Posterior vena cava (tissue), 2 donors: ENCODE measurements at regions of chrX and their contacts with region 1.

Region 1: GRCh38 chrX:11864171-11864570 is 106.1 kb downstream of the MSL3 start:
- DNase-seq: no peak

Region 2: GRCh38 chrX:11540532-11541377 is 323.4 kb before region 1 on chrX:
- intact Hi-C with region 1: no loop called
- DNase-seq: no peak

Region 3: DNA sequence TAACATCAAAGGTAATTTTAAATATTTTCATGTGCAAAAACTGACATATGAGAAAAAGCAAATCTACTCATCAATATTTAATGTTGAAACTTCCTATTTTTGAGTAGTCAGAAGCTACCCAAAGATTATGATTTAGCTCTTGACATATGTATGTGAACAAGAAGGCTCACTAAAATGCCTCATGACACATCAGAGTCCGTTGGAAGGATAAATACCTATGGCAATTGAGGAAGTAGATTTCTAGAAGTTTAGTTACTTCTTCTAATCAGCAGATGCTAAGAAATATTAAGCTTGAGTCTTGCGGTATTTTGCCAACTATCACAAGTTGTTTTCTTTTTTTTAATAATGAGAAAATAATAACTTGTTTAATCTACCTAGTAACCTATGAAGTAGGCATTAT is 50.8 kb before region 1 on chrX:
- intact Hi-C with region 1: no loop called
- DNase-seq: no peak

Region 4: GRCh38 chrX:11890836-11891514 is 26.8 kb after region 1 on chrX:
- intact Hi-C with region 1: no loop called
- DNase-seq: peak; percentile 79

Region 5: GRCh38 chrX:11913001-11913400 is 48.8 kb after region 1 on chrX:
- intact Hi-C with region 1: loop called in 1 of 2 experiments (anchors 5 kb)
- DNase-seq: no peak

Region 6: DNA sequence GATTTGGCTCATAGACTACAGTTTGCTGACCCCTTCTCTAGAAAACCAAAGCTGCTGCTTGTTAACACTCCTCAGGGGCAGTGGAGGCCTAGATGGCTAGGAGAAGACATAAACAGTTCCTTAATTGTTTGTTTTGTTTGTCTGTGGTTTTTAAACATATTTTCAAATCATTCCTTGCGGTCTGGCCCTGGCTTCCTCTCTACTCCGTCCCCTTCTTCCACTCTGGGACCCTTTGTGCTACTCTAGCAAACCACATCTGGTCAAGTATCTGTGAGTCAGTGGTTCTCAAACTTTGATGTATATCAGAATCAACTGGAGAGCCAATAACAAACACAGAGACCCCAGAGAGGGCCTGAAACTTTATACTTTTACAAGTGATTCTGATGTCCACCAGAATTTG is 310.2 kb after region 1 on chrX:
- intact Hi-C with region 1: no loop called
- DNase-seq: no peak